PC-3 (cell line): ENCODE measurements at regions of chr17 and their contacts with region 1.

Region 1: GRCh38 chr17:50064258-50065001 is 8.5 kb downstream of the ITGA3 start:
- DNase-seq: peak; percentile 100
- ATAC-seq: peak; percentile 58
- H3K4me3 ChIP-seq: peak overlapping the region; percentile 10; the same call in 1 of the 2 replicates
- H3K27ac ChIP-seq: peak overlapping the region; percentile 96
- H3K4me1 ChIP-seq: peaks cover 76% of the 10 kb centered on the region
- H3K27me3 ChIP-seq: no peaks in the 10 kb centered on the region
- CTCF ChIP-seq: no peak

Region 2: DNA sequence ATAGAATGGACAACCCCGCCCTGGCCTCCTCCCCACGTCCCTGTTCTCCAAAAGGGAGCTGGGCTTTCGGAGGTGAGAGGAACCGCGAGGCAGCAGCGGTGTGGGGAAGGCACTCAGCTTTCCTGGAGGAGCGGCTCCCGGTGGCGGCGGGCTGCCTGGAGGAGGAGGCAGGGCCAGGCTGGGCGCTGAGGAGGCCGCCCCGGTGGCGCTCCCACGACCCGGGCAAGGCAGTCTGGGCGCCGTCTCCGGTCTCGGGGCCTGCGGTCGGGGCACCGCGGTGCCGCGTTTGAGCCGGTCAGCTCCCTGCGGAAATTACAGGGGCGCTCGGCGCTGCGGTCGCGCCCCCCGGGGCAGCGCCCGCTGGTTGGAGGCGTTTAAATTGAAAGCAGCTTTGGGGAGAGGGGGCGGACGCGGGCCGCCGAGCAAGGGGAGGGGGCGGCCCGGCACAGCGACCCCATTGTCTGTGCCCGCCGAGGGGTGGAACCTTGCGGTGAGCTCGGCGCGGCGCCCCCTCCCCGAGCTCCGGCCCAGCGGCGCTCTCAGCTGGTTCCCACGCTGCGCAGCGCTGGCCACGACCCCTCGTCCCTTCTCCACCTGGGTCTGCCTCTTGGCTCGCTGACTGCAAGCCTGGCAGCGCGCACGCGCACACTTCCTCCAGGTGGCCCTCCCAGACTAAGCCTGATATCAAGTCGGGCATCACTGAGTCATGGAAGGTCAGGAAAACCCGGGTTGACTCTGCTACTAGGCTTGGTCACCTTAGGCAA is 154.2 kb before region 1 on chr17:
- CTCF ChIA-PET with region 1: no interaction called
- POLR2A ChIA-PET with region 1: no interaction called
- intact Hi-C with region 1: no loop called
- DNase-seq: peak; percentile 79
- ATAC-seq: peak; percentile 52
- H3K4me3 ChIP-seq: no peak overlapping the region
- H3K27ac ChIP-seq: no peak overlapping the region
- H3K4me1 ChIP-seq: peaks cover 30% of the 10 kb centered on the region
- H3K27me3 ChIP-seq: no peaks in the 10 kb centered on the region
- CTCF ChIP-seq: no peak

Region 3: GRCh38 chr17:50087246-50087911 is 22.9 kb after region 1 on chr17:
- CTCF ChIA-PET with region 1: interaction called, 5 read pairs
- POLR2A ChIA-PET with region 1: no interaction called
- intact Hi-C with region 1: loop called (anchors 2 kb)
- DNase-seq: peak; percentile 88
- ATAC-seq: peak; percentile 61
- H3K4me3 ChIP-seq: no peak overlapping the region
- H3K27ac ChIP-seq: no peak overlapping the region
- H3K4me1 ChIP-seq: no peaks in the 10 kb centered on the region
- H3K27me3 ChIP-seq: no peaks in the 10 kb centered on the region
- CTCF ChIP-seq: peak; percentile 99